Activated naive CD4-positive, alpha-beta T cell treated with anti-CD3 and anti-CD28 coated beads for 36 hours (primary cell): ENCODE measurements at regions of chr2 and their contacts with region 1.

Region 1: GRCh38 chr2:229780856-229781773 is 66.8 kb upstream of the DNER start:
- DNase-seq: no peak
- H3K4me3 Mint-ChIP-seq: no peak overlapping the region
- H3K27ac Mint-ChIP-seq: no peak overlapping the region
- H3K4me1 Mint-ChIP-seq: peaks cover 11% of the 10 kb centered on the region
- H3K27me3 Mint-ChIP-seq: no peaks in the 10 kb centered on the region

Region 2: GRCh38 chr2:229794636-229795035 is 13.5 kb after region 1 on chr2:
- CTCF ChIA-PET with region 1: interaction called, 14 read pairs
- intact Hi-C with region 1: no loop called
- DNase-seq: no peak
- H3K4me3 Mint-ChIP-seq: no peak overlapping the region
- H3K27ac Mint-ChIP-seq: no peak overlapping the region
- H3K4me1 Mint-ChIP-seq: peaks cover 2% of the 10 kb centered on the region
- H3K27me3 Mint-ChIP-seq: no peaks in the 10 kb centered on the region

Region 3: GRCh38 chr2:229910832-229911412 is 129.8 kb after region 1 on chr2:
- CTCF ChIA-PET with region 1: interaction called, 12 read pairs
- intact Hi-C with region 1: loop called (anchors 5 kb)
- DNase-seq: peak; percentile 36
- H3K4me3 Mint-ChIP-seq: no peak overlapping the region
- H3K27ac Mint-ChIP-seq: peak overlapping the region; percentile 7
- H3K4me1 Mint-ChIP-seq: peaks cover 53% of the 10 kb centered on the region
- H3K27me3 Mint-ChIP-seq: no peaks in the 10 kb centered on the region